ENCODE measurements at regions of chr17 and their contacts with region 1.

Region 1: DNA sequence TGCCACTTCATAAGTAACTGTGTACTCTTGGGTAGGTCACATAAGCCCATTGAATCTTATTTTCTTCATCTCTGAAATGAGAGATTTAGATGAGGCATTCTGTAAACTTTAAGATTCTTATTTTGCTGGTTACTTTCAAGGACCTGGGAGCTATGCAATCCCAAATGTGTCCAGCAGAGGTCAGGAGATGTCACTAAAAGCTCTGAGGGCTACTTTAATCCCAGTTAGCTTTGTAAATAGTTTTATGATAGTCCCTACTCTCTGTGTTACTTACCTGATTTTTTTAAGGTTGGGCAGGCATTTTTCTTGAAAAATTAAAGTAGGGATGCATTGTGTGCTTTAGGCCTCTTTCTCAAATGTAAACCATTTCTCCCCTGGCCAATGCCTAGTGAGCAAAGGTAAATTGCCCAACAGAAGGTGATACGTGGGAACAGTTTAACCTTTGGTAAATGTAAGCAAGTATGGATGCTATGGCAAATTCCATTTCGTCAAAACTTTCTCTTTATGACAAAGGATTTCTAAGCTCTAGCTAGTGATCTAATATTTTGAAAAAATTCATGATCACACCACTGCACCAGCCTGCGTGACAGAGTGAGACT is 57.1 kb upstream of the WSB1 start:
- DNase-seq: peak; percentile 92
- H3K4me3 Mint-ChIP-seq: no peak overlapping the region
- H3K27ac Mint-ChIP-seq: no peak overlapping the region
- H3K4me1 Mint-ChIP-seq: peaks cover 20% of the 10 kb centered on the region
- H3K27me3 Mint-ChIP-seq: peaks cover 18% of the 10 kb centered on the region

Region 2: GRCh38 chr17:27265333-27265732 is 28.5 kb after region 1 on chr17:
- intact Hi-C with region 1: no loop called
- DNase-seq: no peak
- H3K4me3 Mint-ChIP-seq: no peak overlapping the region
- H3K27ac Mint-ChIP-seq: no peak overlapping the region
- H3K4me1 Mint-ChIP-seq: no peaks in the 10 kb centered on the region
- H3K27me3 Mint-ChIP-seq: peaks cover 24% of the 10 kb centered on the region

Region 3: GRCh38 chr17:27293898-27294688 is 57.3 kb after region 1 on chr17 and contains the start of gene WSB1:
- intact Hi-C with region 1: loop called (anchors 1 kb)
- DNase-seq: peak; percentile 98
- H3K4me3 Mint-ChIP-seq: peak within 1 kb of the TSS; percentile 98
- H3K27ac Mint-ChIP-seq: peak within 1 kb of the TSS; percentile 100
- H3K4me1 Mint-ChIP-seq: peaks cover 30% of the 10 kb centered on the region
- H3K27me3 Mint-ChIP-seq: no peaks in the 10 kb centered on the region
- total RNA-seq, gene WSB1: 135 and 136 TPM in 2 replicates

Region 4: DNA sequence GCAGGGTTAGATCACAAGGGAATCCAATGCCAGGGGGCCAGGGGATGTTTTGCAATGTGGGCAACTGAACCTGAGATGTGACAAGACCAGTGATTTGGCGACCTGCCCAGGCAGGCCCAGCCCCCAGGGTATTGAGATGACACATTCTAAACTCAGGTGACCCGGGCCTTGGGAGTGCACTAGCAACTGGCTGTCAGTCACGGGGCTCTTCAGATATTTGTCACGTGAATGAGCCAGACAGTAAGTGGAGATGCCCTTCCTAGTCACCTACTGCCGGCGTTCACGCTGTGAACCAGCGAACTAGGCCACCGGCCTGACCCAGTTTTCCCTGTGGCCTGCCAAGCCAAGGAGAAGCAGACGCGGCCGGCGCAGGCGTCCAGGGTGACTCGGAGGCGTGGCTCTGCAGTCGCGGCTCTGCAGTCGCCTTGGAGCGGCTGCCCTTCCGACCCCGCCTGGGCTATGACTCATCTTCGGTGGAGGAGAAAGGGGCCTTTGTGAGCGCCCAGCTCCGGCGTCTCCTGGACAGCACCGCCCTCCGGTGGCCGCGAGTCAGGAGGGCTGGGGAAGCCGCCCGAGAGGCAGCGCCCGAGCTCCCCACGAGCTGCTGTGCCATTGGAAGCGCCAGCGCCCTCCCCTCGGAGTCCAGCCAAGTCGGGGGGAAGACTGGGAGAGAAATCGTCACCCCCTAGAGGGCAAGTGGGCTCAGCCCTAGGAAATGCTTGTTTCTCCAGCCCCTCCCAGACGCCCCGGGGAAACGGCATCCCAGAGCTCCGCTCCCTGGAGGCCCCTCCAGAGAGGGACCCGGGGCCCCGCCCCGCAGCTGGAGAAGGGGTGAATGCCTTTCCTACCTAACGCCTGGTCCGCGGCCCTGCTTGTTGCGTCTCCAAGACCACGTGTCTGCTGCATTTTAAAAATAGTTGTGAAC is 95.9 kb after region 1 on chr17:
- intact Hi-C with region 1: loop called (anchors 1 kb)
- DNase-seq: peak; percentile 96
- H3K4me3 Mint-ChIP-seq: peak overlapping the region; percentile 86
- H3K27ac Mint-ChIP-seq: peak overlapping the region; percentile 98
- H3K4me1 Mint-ChIP-seq: peaks cover 22% of the 10 kb centered on the region
- H3K27me3 Mint-ChIP-seq: peaks cover 1% of the 10 kb centered on the region

Region 5: DNA sequence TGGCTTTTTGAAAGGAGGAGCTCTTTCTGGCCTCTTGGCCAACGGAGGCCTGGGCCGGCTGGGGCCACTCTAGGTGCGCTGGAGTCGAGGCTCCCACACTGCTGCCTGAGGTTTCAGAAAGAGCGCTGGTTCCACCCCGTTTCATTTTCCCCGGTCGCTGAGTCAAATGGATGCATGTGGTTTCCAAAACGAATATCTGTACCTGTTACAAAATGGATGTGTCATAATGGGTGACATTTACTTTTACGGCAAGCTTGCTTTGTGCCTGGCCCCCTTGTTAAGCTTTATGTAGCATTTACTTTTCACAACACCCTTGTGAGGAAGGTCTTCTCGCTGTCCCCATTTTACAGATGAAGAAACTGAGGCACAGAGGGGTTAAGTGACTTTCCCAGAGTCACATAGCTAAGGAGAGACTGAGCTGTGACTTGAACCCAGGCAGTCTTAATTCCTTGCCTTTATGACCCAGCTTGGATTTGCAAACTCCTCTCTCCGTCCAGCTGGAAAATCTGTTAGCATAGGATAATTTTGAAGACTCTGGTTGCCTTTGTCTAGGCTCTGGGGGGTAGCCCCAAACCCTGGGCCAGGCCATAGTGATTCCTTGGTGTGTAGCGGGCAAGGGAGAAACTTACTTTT is 230.0 kb after region 1 on chr17:
- intact Hi-C with region 1: loop called (anchors 1 kb)
- DNase-seq: peak; percentile 93
- H3K4me3 Mint-ChIP-seq: peak overlapping the region; percentile 83
- H3K27ac Mint-ChIP-seq: peak overlapping the region; percentile 97
- H3K4me1 Mint-ChIP-seq: peaks cover 82% of the 10 kb centered on the region
- H3K27me3 Mint-ChIP-seq: no peaks in the 10 kb centered on the region

Region 6: GRCh38 chr17:27654654-27655524 is 418.1 kb after region 1 on chr17:
- intact Hi-C with region 1: loop called (anchors 1 kb)
- DNase-seq: peak; percentile 90
- H3K4me3 Mint-ChIP-seq: no peak overlapping the region
- H3K27ac Mint-ChIP-seq: peak overlapping the region; percentile 51
- H3K4me1 Mint-ChIP-seq: peaks cover 9% of the 10 kb centered on the region
- H3K27me3 Mint-ChIP-seq: no peaks in the 10 kb centered on the region

Measured in activated CD4-positive, alpha-beta T cell treated with anti-CD3 and anti-CD28 coated beads, Interleukin-2, amount 10 ng/mL, durations not matched to agents 24 days and 14 days (primary cell).